ENCODE measurements at regions of chr2 and their contacts with region 1.

Region 1: GRCh38 chr2:157349949-157350515 is 24.4 kb upstream of the ERMN start:
- DNase-seq: no peak
- H3K4me3 ChIP-seq: no peak overlapping the region
- H3K4me3 Mint-ChIP-seq: no peak overlapping the region
- H3K27ac ChIP-seq: no peak overlapping the region
- H3K27ac Mint-ChIP-seq: peak overlapping the region in 1 of 7 donors; percentile 47
- H3K4me1 ChIP-seq: no peaks in the 10 kb centered on the region
- H3K4me1 Mint-ChIP-seq: peaks cover 16 to 47% (median 20%) of the 10 kb centered on the region in 4 donors
- H3K27me3 ChIP-seq: no peaks in the 10 kb centered on the region
- H3K27me3 Mint-ChIP-seq: no peaks in the 10 kb centered on the region

Region 2: DNA sequence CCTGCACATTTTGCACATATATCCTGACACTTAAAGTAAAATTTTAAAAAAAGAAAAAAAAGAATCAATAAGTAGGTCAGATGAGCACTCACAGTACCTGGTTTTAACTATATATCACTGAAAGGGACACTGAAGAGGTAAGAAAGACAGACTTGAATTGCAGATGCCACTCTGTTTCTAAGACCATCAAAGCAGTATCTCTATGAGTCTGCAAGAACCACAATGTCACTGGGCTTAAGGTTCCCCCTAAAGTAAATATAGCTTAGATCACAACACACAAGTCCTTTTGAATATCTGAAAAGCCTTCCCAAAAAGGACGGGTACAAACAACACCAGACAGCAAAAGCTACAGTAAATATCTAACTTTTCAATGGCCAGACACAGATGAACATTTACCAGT is 36.2 kb after region 1 on chr2:
- CTCF ChIA-PET with region 1: interaction called, 3 read pairs
- POLR2A ChIA-PET with region 1: no interaction called
- intact Hi-C with region 1: loop called (anchors 5 kb)
- DNase-seq: no peak
- H3K4me3 ChIP-seq: no peak overlapping the region
- H3K4me3 Mint-ChIP-seq: no peak overlapping the region
- H3K27ac ChIP-seq: no peak overlapping the region
- H3K27ac Mint-ChIP-seq: peak overlapping the region in 2 of 7 donors; percentile 9 to 12
- H3K4me1 ChIP-seq: peaks cover 27% of the 10 kb centered on the region
- H3K4me1 Mint-ChIP-seq: peaks cover 32 to 67% (median 49%) of the 10 kb centered on the region in 4 donors
- H3K27me3 ChIP-seq: no peaks in the 10 kb centered on the region
- H3K27me3 Mint-ChIP-seq: no peaks in the 10 kb centered on the region

Measured in CD4-positive, alpha-beta memory T cell (primary cell).